GM12878 (cell line): ENCODE measurements at regions of chr9 and their contacts with region 1.

Region 1: DNA sequence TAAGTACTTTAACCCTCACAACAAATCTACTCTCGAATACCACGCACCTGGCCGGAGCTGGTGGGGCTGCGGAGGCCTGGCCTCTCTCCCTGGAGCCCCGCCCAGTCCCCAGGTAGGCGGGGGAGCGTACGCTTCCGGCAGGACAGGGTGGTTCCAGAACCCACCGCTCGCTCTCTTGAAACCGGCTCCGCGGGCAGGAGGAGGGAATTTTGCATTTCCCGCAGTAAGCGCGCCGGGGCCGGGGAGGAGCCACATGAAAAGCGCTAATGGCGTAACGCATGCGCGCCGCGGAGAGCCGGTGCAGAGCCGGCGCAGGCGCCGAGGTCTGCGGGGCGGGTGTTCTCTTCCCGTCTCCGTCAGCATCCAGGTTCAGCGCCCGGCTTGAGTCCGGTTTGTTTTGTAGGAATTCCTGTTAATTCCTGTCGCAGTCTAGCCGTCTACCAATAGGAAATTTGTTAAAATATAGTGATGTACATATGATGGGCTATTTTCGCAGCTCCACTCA is 20.8 kb downstream of the CAVIN4 start:
- DNase-seq: no peak
- ATAC-seq: peak; percentile 87
- H3K4me3 ChIP-seq: peak overlapping the region; percentile 59; the same call in 1 of the 2 replicates
- H3K27ac ChIP-seq: no peak overlapping the region
- H3K4me1 ChIP-seq: no peaks in the 10 kb centered on the region
- H3K27me3 ChIP-seq: no peaks in the 10 kb centered on the region; a peak in 2 of 4 replicates
- CTCF ChIP-seq: no peak
- EP300 ChIP-seq: no peak
- POLR2A ChIP-seq: peak; percentile 47; the same call in 1 of the 2 replicates
- RAD21 ChIP-seq: no peak

Region 2: GRCh38 chr9:100011062-100011681 is 587.5 kb before region 1 on chr9:
- CTCF ChIA-PET with region 1: no interaction called
- POLR2A ChIA-PET with region 1: no interaction called
- RAD21 ChIA-PET with region 1: no interaction called
- SMC1A ChIA-PET with region 1: no interaction called
- in situ Hi-C with region 1: loop called (anchors 25 kb)
- intact Hi-C with region 1: no loop called
- DNase-seq: peak; percentile 38
- ATAC-seq: peak; percentile 73
- H3K4me3 ChIP-seq: no peak overlapping the region
- H3K27ac ChIP-seq: no peak overlapping the region
- H3K4me1 ChIP-seq: no peaks in the 10 kb centered on the region
- H3K27me3 ChIP-seq: no peaks in the 10 kb centered on the region
- CTCF ChIP-seq: peak; percentile 48 to 58 (median 56)
- EP300 ChIP-seq: no peak
- POLR2A ChIP-seq: no peak
- RAD21 ChIP-seq: peak; percentile 76

Region 3: DNA sequence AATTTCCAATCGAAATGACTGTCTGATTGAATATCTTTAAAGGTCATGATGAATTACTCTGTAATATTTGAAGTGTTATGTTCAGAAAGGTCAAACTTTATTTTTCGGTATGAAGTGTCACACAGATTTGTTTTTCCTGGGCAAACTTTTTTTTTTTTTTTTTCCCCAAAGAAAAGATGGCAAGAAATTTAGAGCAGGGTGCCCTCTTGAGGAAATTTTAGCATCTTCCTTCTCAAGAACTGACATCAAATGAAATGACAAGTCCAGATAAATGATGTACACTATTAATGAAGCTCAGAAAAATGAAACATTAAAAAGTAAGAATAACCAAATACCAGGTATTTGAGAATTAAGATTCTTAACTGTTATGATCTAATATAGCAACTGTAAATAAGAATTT is 376.0 kb before region 1 on chr9:
- CTCF ChIA-PET with region 1: no interaction called
- POLR2A ChIA-PET with region 1: no interaction called
- RAD21 ChIA-PET with region 1: no interaction called
- SMC1A ChIA-PET with region 1: no interaction called
- in situ Hi-C with region 1: no loop called
- intact Hi-C with region 1: loop called (anchors 10 kb)
- DNase-seq: no peak
- ATAC-seq: no peak
- H3K4me3 ChIP-seq: no peak overlapping the region
- H3K27ac ChIP-seq: no peak overlapping the region
- H3K4me1 ChIP-seq: peaks cover 20% of the 10 kb centered on the region
- H3K27me3 ChIP-seq: no peaks in the 10 kb centered on the region
- CTCF ChIP-seq: peak; percentile 12 to 43 (median 26); a peak in 2 of 6 replicates
- EP300 ChIP-seq: no peak
- POLR2A ChIP-seq: no peak
- RAD21 ChIP-seq: peak; percentile 61

Region 4: GRCh38 chr9:100437860-100438805 is 160.6 kb before region 1 on chr9:
- CTCF ChIA-PET with region 1: interaction called, 3 read pairs
- POLR2A ChIA-PET with region 1: no interaction called
- RAD21 ChIA-PET with region 1: no interaction called
- SMC1A ChIA-PET with region 1: no interaction called
- in situ Hi-C with region 1: no loop called
- intact Hi-C with region 1: loop called (anchors 10 kb)
- DNase-seq: no peak
- ATAC-seq: peak; percentile 83
- H3K4me3 ChIP-seq: no peak overlapping the region
- H3K27ac ChIP-seq: no peak overlapping the region
- H3K4me1 ChIP-seq: no peaks in the 10 kb centered on the region
- H3K27me3 ChIP-seq: no peaks in the 10 kb centered on the region
- CTCF ChIP-seq: peak; percentile 88 to 92 (median 91)
- EP300 ChIP-seq: no peak
- POLR2A ChIP-seq: no peak
- RAD21 ChIP-seq: peak; percentile 61

Region 5: DNA sequence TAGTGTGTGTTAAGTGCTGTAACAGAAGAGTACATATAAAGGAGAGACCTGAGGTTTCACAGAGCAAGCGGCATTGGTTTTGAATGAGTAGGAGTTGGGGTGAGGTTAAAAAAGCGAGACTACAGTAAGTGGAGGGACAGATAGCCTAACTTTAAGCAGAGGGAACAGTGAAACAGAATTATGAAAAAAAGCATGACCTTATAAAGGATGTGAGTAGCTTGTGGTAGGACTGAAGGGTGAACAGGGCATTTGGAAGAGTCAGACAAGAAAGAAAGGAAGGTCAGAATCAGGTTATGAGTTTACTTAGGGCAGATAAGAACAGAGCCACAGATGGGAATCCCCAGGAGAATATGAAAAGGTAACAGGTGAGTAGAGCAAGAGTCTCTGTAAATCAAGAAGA is 149.3 kb before region 1 on chr9:
- CTCF ChIA-PET with region 1: no interaction called
- POLR2A ChIA-PET with region 1: no interaction called
- RAD21 ChIA-PET with region 1: no interaction called
- SMC1A ChIA-PET with region 1: no interaction called
- in situ Hi-C with region 1: no loop called
- intact Hi-C with region 1: no loop called
- DNase-seq: no peak
- ATAC-seq: peak; percentile 75
- H3K4me3 ChIP-seq: 0 out of 2 replicates have a peak overlapping the region, but pooled peaks have one; percentile 3
- H3K27ac ChIP-seq: no peak overlapping the region
- H3K4me1 ChIP-seq: peaks cover 14% of the 10 kb centered on the region
- H3K27me3 ChIP-seq: no peaks in the 10 kb centered on the region
- CTCF ChIP-seq: no peak
- EP300 ChIP-seq: no peak
- POLR2A ChIP-seq: no peak
- RAD21 ChIP-seq: no peak

Region 6: GRCh38 chr9:100619665-100620064 is 21.0 kb after region 1 on chr9:
- CTCF ChIA-PET with region 1: interaction called, 13 read pairs
- POLR2A ChIA-PET with region 1: interaction called, 3 read pairs
- RAD21 ChIA-PET with region 1: no interaction called
- SMC1A ChIA-PET with region 1: interaction called, 4 read pairs
- in situ Hi-C with region 1: no loop called
- intact Hi-C with region 1: no loop called
- DNase-seq: no peak
- ATAC-seq: peak; percentile 84
- H3K4me3 ChIP-seq: no peak overlapping the region
- H3K27ac ChIP-seq: no peak overlapping the region
- H3K4me1 ChIP-seq: no peaks in the 10 kb centered on the region
- H3K27me3 ChIP-seq: no peaks in the 10 kb centered on the region
- CTCF ChIP-seq: no peak
- EP300 ChIP-seq: no peak
- POLR2A ChIP-seq: no peak
- RAD21 ChIP-seq: no peak

Region 7: GRCh38 chr9:100774962-100775361 is 176.3 kb after region 1 on chr9:
- CTCF ChIA-PET with region 1: no interaction called
- POLR2A ChIA-PET with region 1: no interaction called
- RAD21 ChIA-PET with region 1: no interaction called
- SMC1A ChIA-PET with region 1: no interaction called
- in situ Hi-C with region 1: no loop called
- intact Hi-C with region 1: no loop called
- DNase-seq: no peak
- ATAC-seq: no peak
- H3K4me3 ChIP-seq: no peak overlapping the region
- H3K27ac ChIP-seq: no peak overlapping the region
- H3K4me1 ChIP-seq: no peaks in the 10 kb centered on the region
- H3K27me3 ChIP-seq: no peaks in the 10 kb centered on the region
- CTCF ChIP-seq: no peak
- EP300 ChIP-seq: no peak
- POLR2A ChIP-seq: no peak
- RAD21 ChIP-seq: no peak

Region 8: DNA sequence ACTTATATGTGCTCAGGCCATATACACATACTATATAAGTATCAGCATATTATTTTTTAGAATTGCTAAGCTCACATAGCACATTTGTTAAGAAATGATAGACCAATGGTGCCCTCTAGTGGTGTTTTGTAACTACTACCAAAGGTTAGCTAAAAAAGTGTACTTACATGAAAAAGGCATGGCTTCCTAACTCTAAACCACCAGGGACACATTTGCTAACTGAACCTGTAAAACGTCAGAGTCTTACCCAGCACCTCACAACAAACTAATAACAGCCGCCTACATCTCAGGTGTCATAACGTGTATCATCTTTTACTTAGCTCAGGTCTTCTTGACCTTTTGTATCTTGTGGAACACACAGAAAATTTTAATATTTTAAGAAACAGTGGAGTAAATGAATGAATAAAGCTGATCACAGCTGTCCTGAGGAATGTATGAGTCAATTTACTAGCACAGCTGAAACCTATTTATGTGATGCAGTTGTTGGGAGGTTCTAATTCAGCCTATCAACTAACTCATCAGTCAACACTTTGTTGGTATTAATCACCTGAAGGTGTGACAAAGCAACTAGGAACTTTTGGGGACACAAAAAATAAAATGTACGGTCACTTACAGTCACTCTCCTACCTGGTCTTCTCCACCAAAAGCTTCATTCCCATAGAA is 713.2 kb after region 1 on chr9:
- CTCF ChIA-PET with region 1: interaction called, 56 read pairs
- POLR2A ChIA-PET with region 1: no interaction called
- RAD21 ChIA-PET with region 1: interaction called, 32 read pairs
- SMC1A ChIA-PET with region 1: interaction called, 13 read pairs
- in situ Hi-C with region 1: loop called (anchors 10 kb)
- intact Hi-C with region 1: loop called (anchors 1 kb)
- DNase-seq: peak; percentile 23
- ATAC-seq: peak; percentile 93
- H3K4me3 ChIP-seq: no peak overlapping the region
- H3K27ac ChIP-seq: no peak overlapping the region
- H3K4me1 ChIP-seq: no peaks in the 10 kb centered on the region
- H3K27me3 ChIP-seq: no peaks in the 10 kb centered on the region
- CTCF ChIP-seq: peak; percentile 46 to 72 (median 65); a peak in 4 of 6 replicates
- EP300 ChIP-seq: no peak
- POLR2A ChIP-seq: no peak
- RAD21 ChIP-seq: peak; percentile 75